ENCODE measurements at regions of chr6 and their contacts with region 1.

Region 1: DNA sequence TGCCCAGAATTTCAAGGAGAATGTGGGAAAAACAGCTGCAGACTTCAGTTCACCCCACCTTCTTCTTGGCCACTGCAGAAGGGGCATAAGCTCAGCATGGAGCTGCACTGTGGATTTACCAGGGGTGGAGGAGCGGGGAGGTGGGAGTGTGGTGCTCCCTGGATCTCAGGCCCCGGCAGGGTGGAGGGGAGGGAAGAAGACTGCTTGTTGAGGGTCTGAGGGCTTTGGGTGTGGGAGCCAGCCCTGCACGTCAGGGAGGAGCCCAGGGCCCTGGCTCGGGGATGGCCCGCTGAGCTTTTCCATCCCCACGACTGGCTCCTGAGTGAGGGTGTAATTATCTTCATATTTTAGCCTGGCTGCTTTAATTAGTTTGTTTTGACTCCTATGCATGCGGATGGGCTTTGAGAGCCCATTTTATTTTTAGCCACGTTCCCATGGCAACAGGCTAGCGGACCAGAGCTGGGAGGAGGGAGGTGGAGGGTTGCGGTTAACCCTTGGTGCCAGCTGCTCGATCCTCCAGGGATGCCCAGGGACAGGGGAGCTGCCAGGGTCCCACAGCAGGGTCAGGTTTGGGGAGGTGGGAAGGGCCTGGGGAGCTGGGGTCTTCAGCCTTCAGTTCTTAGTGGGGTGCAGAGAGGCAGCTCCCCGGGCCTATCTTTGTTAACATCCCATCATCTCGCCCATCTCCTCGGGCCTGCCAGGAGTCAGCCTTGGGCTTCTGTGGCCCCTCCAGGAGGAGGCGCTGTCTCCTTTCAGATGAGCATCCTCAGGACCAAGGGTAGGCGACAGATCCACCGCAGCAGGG is 68.2 kb downstream of the RAB44 start:
- DNase-seq: peak; percentile 66
- ATAC-seq: peak; percentile 92
- H3K4me3 Mint-ChIP-seq: peak overlapping the region; percentile 44
- H3K27ac Mint-ChIP-seq: peak overlapping the region; percentile 24
- H3K4me1 Mint-ChIP-seq: peaks cover 48% of the 10 kb centered on the region
- H3K27me3 Mint-ChIP-seq: no peaks in the 10 kb centered on the region
- CTCF ChIP-seq: peak; percentile 63

Region 2: DNA sequence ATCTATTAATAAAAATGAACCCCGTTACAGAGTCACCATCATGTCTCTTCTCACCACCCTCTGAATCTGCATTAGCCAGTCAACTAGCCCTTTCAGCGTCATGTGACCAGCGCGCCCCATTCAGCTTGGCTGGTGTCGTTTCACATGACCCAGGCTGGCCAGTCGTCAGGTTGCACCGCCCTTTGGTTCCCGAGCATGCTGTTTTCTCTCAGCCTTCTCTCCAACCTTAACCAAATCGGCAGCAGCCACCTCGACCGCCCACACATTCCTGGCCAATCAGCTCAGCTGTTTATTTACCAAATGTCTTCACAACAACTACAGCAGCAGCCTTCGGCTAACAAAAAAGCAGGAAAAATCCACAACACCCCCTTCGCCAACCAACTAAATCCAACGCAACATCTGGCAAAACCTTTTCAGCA is 166.0 kb before region 1 on chr6:
- CTCF ChIA-PET with region 1: no interaction called
- POLR2A ChIA-PET with region 1: interaction called, 15 read pairs
- intact Hi-C with region 1: no loop called
- DNase-seq: no peak
- ATAC-seq: no peak
- H3K4me3 Mint-ChIP-seq: peak overlapping the region; percentile 71
- H3K27ac Mint-ChIP-seq: peak overlapping the region; percentile 53
- H3K4me1 Mint-ChIP-seq: peaks cover 72% of the 10 kb centered on the region
- H3K27me3 Mint-ChIP-seq: no peaks in the 10 kb centered on the region
- CTCF ChIP-seq: no peak

Region 3: DNA sequence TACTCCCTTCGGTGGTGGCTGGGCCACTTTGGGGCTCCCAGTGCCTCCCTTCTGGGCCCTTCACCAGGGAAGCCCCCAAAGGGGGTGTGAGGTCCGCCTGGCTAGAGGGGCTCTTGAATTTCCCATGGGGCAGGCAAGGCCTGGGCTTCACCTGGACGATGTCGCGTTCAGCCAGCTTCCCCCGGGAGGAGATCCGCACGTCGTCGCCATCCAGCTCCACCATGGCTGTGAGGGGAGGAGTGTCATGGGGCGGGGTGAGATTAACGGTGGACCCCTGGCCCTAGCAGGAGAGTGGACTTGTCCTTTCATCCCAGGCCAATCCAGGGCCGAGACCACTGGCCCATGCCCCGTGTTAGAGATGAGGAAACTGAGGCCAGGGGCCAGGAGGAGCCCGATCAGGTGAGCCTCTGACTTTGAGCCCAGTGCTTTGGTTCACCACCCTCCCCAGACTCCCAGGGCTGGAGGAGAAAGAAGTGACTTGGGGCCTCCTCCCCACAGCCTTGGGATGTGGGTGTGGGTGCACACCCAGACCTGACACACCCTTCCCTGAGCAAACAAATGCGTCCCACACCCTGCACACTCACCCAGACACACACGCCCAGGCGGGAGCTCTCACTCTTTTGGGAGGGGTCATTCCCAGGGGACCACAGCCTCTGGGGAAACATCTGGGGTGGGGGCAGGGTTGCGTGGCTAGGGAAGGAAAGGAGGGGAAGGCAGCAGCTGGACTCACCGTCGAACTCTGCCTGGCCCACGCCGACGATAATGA is 22.1 kb before region 1 on chr6:
- CTCF ChIA-PET with region 1: no interaction called
- POLR2A ChIA-PET with region 1: no interaction called
- intact Hi-C with region 1: no loop called
- DNase-seq: no peak
- ATAC-seq: peak; percentile 32
- H3K4me3 Mint-ChIP-seq: peak overlapping the region; percentile 59
- H3K27ac Mint-ChIP-seq: peak overlapping the region; percentile 84
- H3K4me1 Mint-ChIP-seq: peaks cover 75% of the 10 kb centered on the region
- H3K27me3 Mint-ChIP-seq: no peaks in the 10 kb centered on the region
- CTCF ChIP-seq: no peak

Region 4: GRCh38 chr6:36780442-36781177 is 14.8 kb after region 1 on chr6:
- CTCF ChIA-PET with region 1: interaction called, 98 read pairs
- POLR2A ChIA-PET with region 1: interaction called, 21 read pairs
- intact Hi-C with region 1: loop called (anchors 1 kb)
- DNase-seq: no peak
- ATAC-seq: peak; percentile 35
- H3K4me3 Mint-ChIP-seq: peak overlapping the region; percentile 17
- H3K27ac Mint-ChIP-seq: peak overlapping the region; percentile 76
- H3K4me1 Mint-ChIP-seq: peaks cover 25% of the 10 kb centered on the region
- H3K27me3 Mint-ChIP-seq: peaks cover 10% of the 10 kb centered on the region
- CTCF ChIP-seq: no peak

Region 5: DNA sequence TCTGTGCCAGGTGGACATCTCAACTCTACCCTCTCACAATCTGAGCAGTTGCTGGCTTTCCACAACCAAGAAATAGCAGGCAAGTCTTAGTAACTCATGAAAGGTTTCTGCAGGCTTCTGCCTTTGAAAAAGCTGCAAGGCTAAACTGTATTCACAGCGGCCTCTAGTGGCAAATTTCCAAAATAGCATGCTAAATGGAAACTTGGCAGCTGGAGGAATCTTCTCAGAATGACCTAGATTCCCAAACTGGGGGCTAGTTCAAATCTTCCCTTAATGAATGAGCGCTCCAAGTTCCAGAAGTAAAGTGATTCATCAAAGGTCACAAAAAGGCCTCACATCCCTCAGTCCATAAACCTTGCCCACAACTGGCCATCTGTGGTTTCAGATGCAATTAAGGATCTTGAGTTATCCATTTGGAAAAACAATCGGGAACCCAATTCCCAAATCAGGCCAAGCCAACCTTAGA is 85.4 kb after region 1 on chr6:
- CTCF ChIA-PET with region 1: interaction called, 67 read pairs
- POLR2A ChIA-PET with region 1: interaction called, 4 read pairs
- intact Hi-C with region 1: loop called (anchors 1 kb)
- DNase-seq: no peak
- ATAC-seq: no peak
- H3K4me3 Mint-ChIP-seq: no peak overlapping the region
- H3K27ac Mint-ChIP-seq: no peak overlapping the region
- H3K4me1 Mint-ChIP-seq: peaks cover 6% of the 10 kb centered on the region
- H3K27me3 Mint-ChIP-seq: peaks cover 2% of the 10 kb centered on the region
- CTCF ChIP-seq: no peak

Region 6: GRCh38 chr6:37207903-37208456 is 442.2 kb after region 1 on chr6:
- CTCF ChIA-PET with region 1: interaction called, 26 read pairs
- POLR2A ChIA-PET with region 1: no interaction called
- intact Hi-C with region 1: loop called (anchors 1 kb)
- DNase-seq: peak; percentile 79
- ATAC-seq: peak; percentile 97
- H3K4me3 Mint-ChIP-seq: no peak overlapping the region
- H3K27ac Mint-ChIP-seq: peak overlapping the region; percentile 5
- H3K4me1 Mint-ChIP-seq: peaks cover 20% of the 10 kb centered on the region
- H3K27me3 Mint-ChIP-seq: no peaks in the 10 kb centered on the region
- CTCF ChIP-seq: no peak

Measured in activated B cell treated with CpG ODN at 0.5 μM for 24 hours (primary cell).